ENCODE measurements at regions of chr13 and their contacts with region 1.

Region 1: DNA sequence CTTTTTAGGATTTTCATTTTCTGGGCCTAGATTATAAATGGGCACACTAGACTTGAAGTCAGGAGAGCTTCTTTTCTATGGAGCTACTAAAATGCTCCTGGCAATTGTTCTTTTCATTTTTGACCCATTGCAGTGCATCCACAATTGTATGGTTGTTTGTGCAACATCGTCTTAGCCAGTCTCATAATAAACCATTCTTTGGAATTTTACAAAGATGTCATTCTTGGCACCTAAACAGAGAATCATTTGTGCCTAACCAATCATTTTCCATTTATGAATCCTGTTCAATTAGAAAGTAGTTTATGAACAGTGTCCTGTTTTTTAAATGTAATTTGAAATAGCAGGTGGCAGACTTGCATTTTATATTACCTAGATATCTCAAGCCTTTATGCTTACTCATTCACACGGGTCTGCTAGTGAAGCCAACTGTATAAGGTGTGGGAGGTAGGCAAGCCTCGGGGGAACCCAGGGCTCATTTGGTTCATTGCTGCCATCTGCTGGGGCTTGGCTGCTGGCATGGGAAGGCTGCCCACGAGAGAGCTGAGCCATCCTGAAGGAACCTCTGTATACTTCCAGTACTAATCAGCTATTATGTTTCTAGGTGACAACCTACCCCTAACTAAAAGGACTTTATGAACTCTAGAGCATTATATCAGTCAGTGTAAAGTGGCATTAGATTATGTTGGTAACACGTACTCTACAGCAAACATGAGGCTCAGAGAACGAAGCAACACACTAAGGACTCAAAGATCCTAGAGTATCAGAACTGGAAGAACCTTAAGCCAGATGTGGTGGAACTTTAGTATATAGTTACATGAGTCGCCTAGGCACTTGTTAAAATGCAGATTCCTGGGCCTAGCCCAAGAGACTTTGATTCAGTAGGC is 60.0 kb downstream of the TPT1 start:
- DNase-seq: peak; percentile 79
- H3K4me3 ChIP-seq: no peak overlapping the region
- H3K27ac ChIP-seq: no peak overlapping the region
- H3K4me1 ChIP-seq: peaks cover 4% of the 10 kb centered on the region
- H3K27me3 ChIP-seq: no peaks in the 10 kb centered on the region
- CTCF ChIP-seq: peak; percentile 84

Region 2: DNA sequence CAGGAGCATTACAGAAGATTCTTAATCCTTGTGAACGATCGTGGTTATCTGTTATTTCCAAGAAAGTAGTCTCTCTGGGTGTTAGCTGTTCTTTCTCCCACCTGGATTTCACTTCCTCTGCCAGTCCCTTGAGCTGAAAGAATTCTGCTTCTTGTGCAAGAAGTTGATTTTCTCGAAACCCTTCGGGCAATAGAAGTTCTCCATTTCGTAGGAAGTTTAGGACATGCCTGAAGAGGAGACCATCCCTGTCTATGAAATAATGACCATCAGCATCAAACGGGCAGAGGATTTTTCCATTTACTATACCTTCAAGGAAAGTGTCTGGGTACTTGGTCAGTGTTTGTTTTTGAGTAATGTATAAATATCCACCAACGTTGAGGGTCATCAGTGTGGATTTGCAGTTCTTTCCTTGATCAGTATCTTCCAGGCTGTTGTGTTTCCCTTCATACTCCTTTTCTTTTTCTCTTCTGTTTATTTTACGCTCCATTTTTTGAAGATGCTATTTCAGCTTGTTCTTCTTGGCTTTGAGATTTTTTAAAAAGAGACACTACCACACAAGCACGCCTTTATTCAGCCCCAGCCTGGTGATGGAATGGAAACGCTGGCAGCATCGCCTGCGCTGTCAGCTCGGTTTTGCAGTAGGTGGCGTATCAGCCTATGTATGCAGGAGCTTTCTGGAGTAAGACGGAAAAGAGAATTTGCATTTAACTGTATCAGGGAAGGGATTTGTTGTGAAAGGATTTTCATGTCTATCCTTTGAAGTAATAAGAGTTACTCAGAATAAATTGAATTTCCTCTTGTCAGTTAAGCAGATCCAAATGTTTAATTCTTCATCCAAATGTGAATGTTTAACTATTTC is 86.7 kb before region 1 on chr13:
- CTCF ChIA-PET with region 1: no interaction called
- POLR2A ChIA-PET with region 1: no interaction called
- intact Hi-C with region 1: loop called (anchors 1 kb)
- DNase-seq: peak; percentile 58
- H3K4me3 ChIP-seq: no peak overlapping the region
- H3K27ac ChIP-seq: no peak overlapping the region
- H3K4me1 ChIP-seq: peaks cover 22% of the 10 kb centered on the region
- H3K27me3 ChIP-seq: no peaks in the 10 kb centered on the region
- CTCF ChIP-seq: peak; percentile 68

Measured in A673 (cell line).